MCF 10A (cell line): ENCODE measurements at regions of chr12 and their contacts with region 1.

Region 1: GRCh38 chr12:54853995-54854566 is at the start of gene MUCL1:
- DNase-seq: peak; percentile 83
- H3K4me3 Mint-ChIP-seq: no peak within 1 kb of the TSS
- H3K27ac Mint-ChIP-seq: no peak within 1 kb of the TSS
- H3K4me1 Mint-ChIP-seq: no peaks in the 10 kb centered on the region
- H3K27me3 Mint-ChIP-seq: no peaks in the 10 kb centered on the region
- CTCF ChIP-seq: peak; percentile 86
- total RNA-seq, gene MUCL1: not detected in 2 replicates

Region 2: GRCh38 chr12:54759751-54760150 is 94.3 kb before region 1 on chr12:
- CTCF ChIA-PET with region 1: interaction called, 3 read pairs
- POLR2A ChIA-PET with region 1: no interaction called
- intact Hi-C with region 1: loop called (anchors 2 kb)
- DNase-seq: peak; percentile 69
- H3K4me3 Mint-ChIP-seq: no peak overlapping the region
- H3K27ac Mint-ChIP-seq: no peak overlapping the region
- H3K4me1 Mint-ChIP-seq: no peaks in the 10 kb centered on the region
- H3K27me3 Mint-ChIP-seq: peaks cover 55% of the 10 kb centered on the region
- CTCF ChIP-seq: peak; percentile 60

Region 3: DNA sequence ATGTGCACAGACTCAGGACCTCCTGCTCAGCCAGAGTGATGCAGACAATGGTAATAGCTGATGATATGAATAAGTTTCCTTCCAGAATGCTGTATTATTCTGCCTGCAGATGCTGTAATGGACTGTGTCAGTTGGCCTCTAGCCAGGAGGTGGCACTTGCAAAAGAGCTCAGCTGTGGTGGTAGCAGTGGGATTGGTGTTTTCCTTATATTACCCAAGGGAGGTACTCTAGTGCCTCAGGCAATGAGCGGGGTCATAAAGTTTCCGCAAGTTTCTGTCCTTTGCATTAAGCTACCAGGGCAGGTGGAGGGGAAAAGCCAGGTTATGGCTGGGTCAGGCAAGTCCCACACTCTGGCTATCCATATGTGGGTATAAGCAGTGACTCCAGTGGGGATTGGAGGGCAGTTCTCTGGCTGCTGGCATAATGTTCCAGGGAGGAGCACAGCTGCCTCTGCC is 13.7 kb before region 1 on chr12:
- CTCF ChIA-PET with region 1: interaction called, 23 read pairs
- POLR2A ChIA-PET with region 1: no interaction called
- intact Hi-C with region 1: no loop called
- DNase-seq: peak; percentile 5
- H3K4me3 Mint-ChIP-seq: no peak overlapping the region
- H3K27ac Mint-ChIP-seq: no peak overlapping the region
- H3K4me1 Mint-ChIP-seq: no peaks in the 10 kb centered on the region
- H3K27me3 Mint-ChIP-seq: peaks cover 48% of the 10 kb centered on the region
- CTCF ChIP-seq: no peak

Region 4: GRCh38 chr12:54865683-54866324 is 11.7 kb after region 1 on chr12:
- CTCF ChIA-PET with region 1: interaction called, 10 read pairs
- POLR2A ChIA-PET with region 1: no interaction called
- intact Hi-C with region 1: no loop called
- DNase-seq: no peak
- H3K4me3 Mint-ChIP-seq: no peak overlapping the region
- H3K27ac Mint-ChIP-seq: no peak overlapping the region
- H3K4me1 Mint-ChIP-seq: no peaks in the 10 kb centered on the region
- H3K27me3 Mint-ChIP-seq: no peaks in the 10 kb centered on the region
- CTCF ChIP-seq: no peak

Region 5: GRCh38 chr12:54935235-54935951 is 81.3 kb after region 1 on chr12:
- CTCF ChIA-PET with region 1: interaction called, 33 read pairs
- POLR2A ChIA-PET with region 1: interaction called, 7 read pairs
- intact Hi-C with region 1: loop called (anchors 1 kb)
- DNase-seq: peak; percentile 93
- H3K4me3 Mint-ChIP-seq: peak overlapping the region; percentile 7
- H3K27ac Mint-ChIP-seq: peak overlapping the region; percentile 96
- H3K4me1 Mint-ChIP-seq: peaks cover 26% of the 10 kb centered on the region
- H3K27me3 Mint-ChIP-seq: no peaks in the 10 kb centered on the region
- CTCF ChIP-seq: peak; percentile 12

Region 6: DNA sequence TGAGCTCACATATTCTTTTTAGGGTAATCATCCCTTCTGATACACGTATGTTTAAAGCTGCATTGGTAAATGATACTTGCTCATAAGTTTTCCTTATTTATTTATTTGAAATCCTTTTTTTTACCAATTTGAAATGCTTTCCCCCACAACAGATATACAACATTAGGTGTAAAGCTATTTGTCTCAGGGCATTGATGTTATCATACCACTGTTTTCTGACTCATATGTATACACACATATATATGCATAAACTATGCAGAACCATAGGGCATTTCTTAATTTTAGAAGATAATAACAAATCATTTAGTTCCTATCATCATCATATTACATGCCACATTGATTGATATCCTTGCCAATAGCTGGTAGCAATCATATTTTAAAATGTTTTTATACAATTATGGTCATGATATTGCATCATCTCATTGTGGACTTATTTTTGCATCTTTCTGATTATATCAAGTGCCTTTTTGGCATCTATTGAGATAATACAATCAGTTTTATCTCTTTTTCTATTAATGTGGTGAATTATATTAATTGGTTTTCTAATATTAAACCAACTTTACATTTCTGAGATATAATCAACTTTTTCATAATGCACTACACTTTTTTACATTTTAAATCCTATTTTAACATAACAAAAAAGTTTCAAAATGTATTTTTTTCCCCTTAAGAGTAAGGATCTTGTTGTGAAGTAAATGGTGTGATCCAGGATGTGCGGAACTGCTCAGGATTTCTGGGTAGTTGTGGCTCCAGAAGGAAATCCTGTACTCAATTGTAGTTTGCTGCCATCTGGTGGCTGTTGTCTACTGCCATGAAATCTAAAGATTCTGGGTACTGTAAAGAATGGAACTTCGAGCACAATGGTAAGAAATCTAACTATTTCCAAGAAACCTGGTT is 288.8 kb after region 1 on chr12:
- CTCF ChIA-PET with region 1: no interaction called
- POLR2A ChIA-PET with region 1: no interaction called
- intact Hi-C with region 1: no loop called
- DNase-seq: peak; percentile 67
- H3K4me3 Mint-ChIP-seq: no peak overlapping the region
- H3K27ac Mint-ChIP-seq: no peak overlapping the region
- H3K4me1 Mint-ChIP-seq: no peaks in the 10 kb centered on the region
- H3K27me3 Mint-ChIP-seq: peaks cover 59% of the 10 kb centered on the region
- CTCF ChIP-seq: peak; percentile 57